ENCODE measurements at regions of chr11 and their contacts with region 1.

Region 1: DNA sequence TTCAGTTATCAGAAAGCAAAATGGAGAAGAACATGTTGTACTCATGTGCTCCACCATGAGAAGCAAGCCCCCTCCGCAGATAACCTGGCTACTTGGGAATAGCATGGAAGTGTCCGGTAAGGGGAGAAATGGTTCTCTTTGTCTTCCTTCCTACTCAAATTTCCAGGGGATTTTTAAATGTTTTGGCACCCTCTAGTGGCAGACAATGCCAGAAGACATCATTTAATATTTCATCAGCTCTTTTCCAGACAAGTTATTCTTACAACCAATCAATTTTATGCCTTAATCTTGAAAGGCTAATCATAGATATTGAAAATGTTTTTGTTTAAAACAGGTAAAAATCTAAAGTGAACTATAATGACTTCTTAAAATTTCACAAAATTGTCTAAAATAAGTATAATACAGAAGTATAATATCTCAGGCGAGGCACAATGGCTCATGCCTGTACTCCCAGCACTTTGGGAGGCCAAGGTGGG is 15.7 kb downstream of the CRTAM start:
- DNase-seq: peak; percentile 77
- H3K27ac ChIP-seq: no peak overlapping the region
- CTCF ChIP-seq: peak; percentile 75

Region 2: GRCh38 chr11:121274332-121274991 is 1579.5 kb before region 1 on chr11:
- CTCF ChIA-PET with region 1: interaction called, 10 read pairs
- POLR2A ChIA-PET with region 1: no interaction called
- DNase-seq: no peak
- H3K27ac ChIP-seq: no peak overlapping the region
- CTCF ChIP-seq: no peak

Region 3: GRCh38 chr11:122628810-122629555 is 225.0 kb before region 1 on chr11:
- CTCF ChIA-PET with region 1: interaction called, 10 read pairs
- POLR2A ChIA-PET with region 1: no interaction called
- DNase-seq: peak; percentile 74
- H3K27ac ChIP-seq: no peak overlapping the region
- CTCF ChIP-seq: peak; percentile 83

Region 4: DNA sequence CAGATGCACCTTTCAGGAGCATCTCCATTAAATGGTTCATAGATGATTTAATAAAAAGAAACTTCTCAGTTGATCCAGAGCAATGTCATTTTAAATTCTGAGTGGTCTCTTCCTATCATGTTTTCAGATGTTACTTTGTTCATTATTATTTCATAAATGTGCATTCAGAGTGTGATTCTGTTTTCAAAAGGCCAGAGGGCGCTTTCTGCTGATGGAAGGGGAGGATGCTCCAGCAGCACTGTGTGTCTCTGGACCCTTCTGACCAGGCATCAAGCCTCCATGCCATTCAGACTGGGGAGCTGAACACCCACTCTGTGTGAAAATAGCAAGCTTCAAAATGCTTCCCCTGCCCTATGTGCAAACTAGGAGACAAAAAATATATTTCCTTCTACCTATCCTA is 39.6 kb before region 1 on chr11:
- CTCF ChIA-PET with region 1: interaction called, 10 read pairs
- POLR2A ChIA-PET with region 1: no interaction called
- DNase-seq: no peak
- H3K27ac ChIP-seq: no peak overlapping the region
- CTCF ChIP-seq: no peak